ENCODE measurements at regions of chr3 and their contacts with region 1.

Region 1: DNA sequence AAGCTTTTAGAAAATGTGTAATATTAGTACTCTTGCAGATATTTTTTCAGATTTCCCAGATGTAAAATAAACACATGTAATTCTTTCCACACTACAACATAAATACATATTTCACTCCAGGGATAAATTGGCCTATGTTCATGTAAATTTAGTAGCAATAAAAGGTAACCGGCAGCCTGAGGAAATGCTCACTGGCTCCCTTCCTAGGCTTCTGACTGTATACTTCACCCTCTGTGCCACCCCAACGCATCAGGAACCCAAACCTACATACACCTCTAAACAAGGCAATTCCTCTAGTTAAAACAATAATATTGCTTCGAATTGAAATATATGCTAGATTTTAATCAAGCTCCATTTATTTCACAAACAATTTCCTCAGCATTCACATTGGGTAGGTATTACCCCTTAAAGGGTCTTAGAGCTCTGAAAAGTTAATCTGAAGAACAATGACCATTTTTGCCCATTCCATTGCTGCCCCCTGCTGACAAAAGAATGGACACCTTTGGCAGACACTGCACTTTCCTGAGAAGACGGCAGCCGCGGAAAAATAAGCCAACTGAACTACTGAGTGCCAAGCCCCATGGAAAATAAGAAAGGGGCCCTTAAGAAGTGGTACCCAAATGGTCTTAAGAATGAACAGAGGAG is 212.5 kb downstream of the OSBPL10 start:
- DNase-seq: peak; percentile 8 to 59 (median 43)
- ATAC-seq: peak; percentile 46
- H3K4me3 ChIP-seq: no peak overlapping the region
- H3K4me3 Mint-ChIP-seq: peak overlapping the region in 1 of 10 donors; percentile 19
- H3K27ac ChIP-seq: no peak overlapping the region
- H3K27ac Mint-ChIP-seq: peak overlapping the region in 1 of 9 donors; percentile 21
- H3K4me1 ChIP-seq: no peaks in the 10 kb centered on the region
- H3K4me1 Mint-ChIP-seq: peaks cover 2 to 53% (median 4%) of the 10 kb centered on the region in 7 donors
- H3K27me3 ChIP-seq: no peaks in the 10 kb centered on the region
- H3K27me3 Mint-ChIP-seq: no peaks in the 10 kb centered on the region

Region 2: DNA sequence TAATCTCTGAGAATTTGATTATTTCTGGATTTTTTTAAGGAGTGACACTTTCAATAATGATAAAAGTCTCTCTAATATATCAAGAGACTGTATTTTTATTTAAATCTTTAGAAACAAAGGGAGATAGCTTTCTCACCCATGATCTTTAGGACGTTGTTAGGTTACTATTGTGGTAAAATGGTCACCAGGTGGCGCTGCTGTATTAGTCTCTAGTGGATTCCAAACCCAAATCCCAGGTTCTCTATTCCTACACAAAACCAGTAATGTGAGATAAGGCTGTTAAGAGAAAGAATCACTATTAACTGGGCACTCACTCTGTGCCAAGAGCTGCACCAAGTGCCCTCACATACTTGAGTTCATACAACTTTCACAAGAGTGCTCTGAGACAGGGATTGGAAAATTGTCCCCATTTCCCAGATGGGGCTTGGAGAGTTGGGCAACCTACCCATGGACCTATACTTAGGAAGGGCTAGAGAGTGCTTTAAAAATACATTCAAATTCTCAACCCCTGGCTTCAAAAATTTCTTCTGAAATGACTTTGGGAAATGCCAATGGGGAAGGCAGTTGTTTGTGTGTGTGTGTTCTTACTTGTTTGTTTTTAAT is 1755.6 kb before region 1 on chr3:
- CTCF ChIA-PET with region 1: no interaction called
- POLR2A ChIA-PET with region 1: no interaction called
- intact Hi-C with region 1: loop called in 1 of 2 experiments (anchors 1 kb)
- DNase-seq: peak in 8 of 9 donors; percentile 4 to 32 (median 22)
- ATAC-seq: peak; percentile 56
- H3K4me3 ChIP-seq: no peak overlapping the region
- H3K4me3 Mint-ChIP-seq: no peak overlapping the region
- H3K27ac ChIP-seq: no peak overlapping the region
- H3K27ac Mint-ChIP-seq: no peak overlapping the region
- H3K4me1 ChIP-seq: no peaks in the 10 kb centered on the region
- H3K4me1 Mint-ChIP-seq: peaks cover 0 to 5% (median 0%) of the 10 kb centered on the region in 7 donors
- H3K27me3 ChIP-seq: no peaks in the 10 kb centered on the region
- H3K27me3 Mint-ChIP-seq: peaks cover 0 to 13% (median 6%) of the 10 kb centered on the region in 5 donors

Region 3: GRCh38 chr3:30779686-30780287 is 988.8 kb before region 1 on chr3:
- CTCF ChIA-PET with region 1: interaction called, 4 read pairs
- POLR2A ChIA-PET with region 1: no interaction called
- intact Hi-C with region 1: loop called in 1 of 2 experiments (anchors 5 kb)
- DNase-seq: no peak
- ATAC-seq: no peak
- H3K4me3 ChIP-seq: no peak overlapping the region
- H3K4me3 Mint-ChIP-seq: no peak overlapping the region
- H3K27ac ChIP-seq: no peak overlapping the region
- H3K27ac Mint-ChIP-seq: no peak overlapping the region
- H3K4me1 ChIP-seq: no peaks in the 10 kb centered on the region
- H3K4me1 Mint-ChIP-seq: peaks cover 0 to 3% (median 0%) of the 10 kb centered on the region in 7 donors
- H3K27me3 ChIP-seq: no peaks in the 10 kb centered on the region
- H3K27me3 Mint-ChIP-seq: peaks cover 2 to 24% (median 7%) of the 10 kb centered on the region in 5 donors

Region 4: DNA sequence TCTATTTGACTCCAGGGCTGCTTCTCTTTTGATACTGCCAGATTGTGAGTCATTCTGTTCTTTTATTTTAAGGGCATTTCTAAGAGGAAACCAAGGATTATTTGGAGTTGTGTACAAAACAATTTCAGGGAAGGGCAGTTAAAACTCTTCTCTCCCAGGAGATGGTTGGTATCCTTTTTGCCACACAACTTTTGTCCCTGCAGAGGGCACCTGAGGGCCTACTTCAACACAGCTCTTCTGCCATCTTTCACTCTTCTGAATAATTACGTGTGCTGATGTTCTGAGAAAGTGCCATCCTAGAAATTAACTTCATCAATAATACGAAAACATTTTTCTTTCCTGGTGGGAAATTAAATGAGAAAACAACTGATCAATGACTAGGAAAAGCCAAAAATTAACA is 798.4 kb before region 1 on chr3:
- CTCF ChIA-PET with region 1: no interaction called
- POLR2A ChIA-PET with region 1: no interaction called
- intact Hi-C with region 1: loop called in 1 of 2 experiments (anchors 1 kb)
- DNase-seq: peak in 4 of 9 donors; percentile 2 to 23 (median 8)
- ATAC-seq: no peak
- H3K4me3 ChIP-seq: no peak overlapping the region
- H3K4me3 Mint-ChIP-seq: no peak overlapping the region
- H3K27ac ChIP-seq: no peak overlapping the region
- H3K27ac Mint-ChIP-seq: no peak overlapping the region
- H3K4me1 ChIP-seq: no peaks in the 10 kb centered on the region
- H3K4me1 Mint-ChIP-seq: peaks cover 0 to 5% (median 0%) of the 10 kb centered on the region in 7 donors
- H3K27me3 ChIP-seq: no peaks in the 10 kb centered on the region
- H3K27me3 Mint-ChIP-seq: peaks cover 3 to 16% (median 9%) of the 10 kb centered on the region in 5 donors

Region 5: DNA sequence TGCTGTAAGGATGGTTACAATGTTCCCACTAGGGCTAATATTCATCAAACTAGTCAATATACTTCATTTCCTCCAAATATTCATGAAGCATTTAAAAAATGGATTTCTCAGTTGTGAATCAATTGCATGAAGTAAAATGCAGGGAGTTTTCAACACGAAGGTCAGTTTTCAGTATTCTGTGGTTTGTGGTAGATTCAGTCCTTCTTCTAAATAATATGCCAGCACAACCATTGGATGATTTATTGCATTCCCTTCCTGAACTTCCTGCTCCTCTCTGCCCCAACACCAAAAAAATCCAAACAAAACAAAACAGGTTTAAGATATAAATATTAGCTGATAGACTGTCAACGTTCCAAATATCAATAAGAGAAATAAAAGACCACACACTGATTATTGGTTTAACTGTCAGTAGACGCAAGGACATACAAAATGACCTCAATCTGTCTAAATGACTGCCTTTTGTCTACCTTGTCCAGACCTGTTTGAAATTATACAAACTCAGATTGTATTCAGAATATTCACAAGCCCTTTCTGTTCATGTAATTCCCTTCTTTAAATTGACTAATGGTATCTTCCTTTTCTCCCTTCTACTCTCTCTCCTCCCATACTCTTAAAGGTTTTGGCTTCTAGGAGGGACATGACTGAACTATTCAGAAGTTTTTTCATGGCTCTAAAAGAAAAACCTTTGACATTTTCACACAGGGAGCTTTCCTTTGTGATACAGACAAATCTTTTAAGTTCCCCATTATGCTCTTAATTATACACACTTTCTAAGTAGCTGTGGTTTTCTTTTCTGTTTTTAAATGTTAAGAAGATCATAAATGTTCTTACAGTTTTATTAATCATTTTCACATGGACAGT is 328.5 kb before region 1 on chr3:
- CTCF ChIA-PET with region 1: no interaction called
- POLR2A ChIA-PET with region 1: no interaction called
- intact Hi-C with region 1: no loop called
- DNase-seq: no peak
- ATAC-seq: no peak
- H3K4me3 ChIP-seq: no peak overlapping the region
- H3K4me3 Mint-ChIP-seq: no peak overlapping the region
- H3K27ac ChIP-seq: no peak overlapping the region
- H3K27ac Mint-ChIP-seq: peak overlapping the region in 1 of 9 donors; percentile 10
- H3K4me1 ChIP-seq: peaks cover 0 to 5% of the 10 kb centered on the region in 2 donors
- H3K4me1 Mint-ChIP-seq: peaks cover 4 to 36% (median 23%) of the 10 kb centered on the region in 7 donors
- H3K27me3 ChIP-seq: no peaks in the 10 kb centered on the region
- H3K27me3 Mint-ChIP-seq: no peaks in the 10 kb centered on the region

Region 6: DNA sequence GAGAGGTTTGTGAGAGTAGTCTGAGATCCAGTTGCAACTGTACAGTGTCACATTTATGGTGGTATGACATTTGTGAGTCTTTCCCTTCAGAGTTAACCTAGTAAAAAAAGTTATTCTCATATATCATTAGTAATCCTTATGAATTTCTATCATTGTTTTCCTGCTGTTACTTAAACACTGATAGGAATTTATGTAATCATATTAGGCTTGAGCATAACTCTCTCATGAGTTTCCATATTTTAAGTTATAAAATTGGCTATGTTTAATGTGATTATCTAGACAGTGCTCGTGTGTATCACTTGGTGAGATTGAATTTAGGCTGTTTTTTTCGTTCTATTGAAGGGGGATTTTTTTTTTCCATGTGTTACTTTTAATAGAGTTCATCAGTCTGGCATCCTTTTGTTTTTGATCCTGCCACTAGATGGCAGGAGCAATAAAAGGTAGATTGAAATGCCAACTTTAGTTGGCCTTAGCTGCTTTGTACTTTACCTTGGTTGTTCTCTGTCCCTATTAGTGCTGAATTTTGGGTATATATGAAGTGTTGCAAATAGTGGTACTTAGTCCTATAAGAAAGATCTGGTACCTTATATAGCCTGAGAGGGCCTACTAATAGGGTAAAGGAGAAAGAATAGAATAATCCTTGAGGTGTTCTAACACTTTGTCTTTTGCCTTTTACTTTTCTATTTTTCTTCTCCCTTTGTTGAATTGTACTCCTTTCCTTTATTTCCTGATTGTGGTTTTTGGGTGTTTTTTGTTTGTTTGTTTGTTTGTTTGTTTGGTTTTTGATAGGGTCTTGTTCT is 217.9 kb before region 1 on chr3:
- CTCF ChIA-PET with region 1: no interaction called
- POLR2A ChIA-PET with region 1: no interaction called
- intact Hi-C with region 1: loop called (anchors 1 kb)
- DNase-seq: peak in 5 of 9 donors; percentile 21 to 47 (median 29)
- ATAC-seq: peak; percentile 79
- H3K4me3 ChIP-seq: no peak overlapping the region
- H3K4me3 Mint-ChIP-seq: peak overlapping the region; percentile 0 to 69 (median 34)
- H3K27ac ChIP-seq: peak overlapping the region; percentile 1
- H3K27ac Mint-ChIP-seq: peak overlapping the region in 8 of 9 donors; percentile 19 to 79 (median 48)
- H3K4me1 ChIP-seq: peaks cover 20 to 40% of the 10 kb centered on the region in 2 donors
- H3K4me1 Mint-ChIP-seq: peaks cover 65 to 94% (median 92%) of the 10 kb centered on the region in 7 donors
- H3K27me3 ChIP-seq: no peaks in the 10 kb centered on the region
- H3K27me3 Mint-ChIP-seq: no peaks in the 10 kb centered on the region

Measured in naive thymus-derived CD4-positive, alpha-beta T cell (primary cell).